Astrocyte of the cerebellum (primary cell): ENCODE measurements at regions of chr1 and their contacts with region 1.

Region 1: DNA sequence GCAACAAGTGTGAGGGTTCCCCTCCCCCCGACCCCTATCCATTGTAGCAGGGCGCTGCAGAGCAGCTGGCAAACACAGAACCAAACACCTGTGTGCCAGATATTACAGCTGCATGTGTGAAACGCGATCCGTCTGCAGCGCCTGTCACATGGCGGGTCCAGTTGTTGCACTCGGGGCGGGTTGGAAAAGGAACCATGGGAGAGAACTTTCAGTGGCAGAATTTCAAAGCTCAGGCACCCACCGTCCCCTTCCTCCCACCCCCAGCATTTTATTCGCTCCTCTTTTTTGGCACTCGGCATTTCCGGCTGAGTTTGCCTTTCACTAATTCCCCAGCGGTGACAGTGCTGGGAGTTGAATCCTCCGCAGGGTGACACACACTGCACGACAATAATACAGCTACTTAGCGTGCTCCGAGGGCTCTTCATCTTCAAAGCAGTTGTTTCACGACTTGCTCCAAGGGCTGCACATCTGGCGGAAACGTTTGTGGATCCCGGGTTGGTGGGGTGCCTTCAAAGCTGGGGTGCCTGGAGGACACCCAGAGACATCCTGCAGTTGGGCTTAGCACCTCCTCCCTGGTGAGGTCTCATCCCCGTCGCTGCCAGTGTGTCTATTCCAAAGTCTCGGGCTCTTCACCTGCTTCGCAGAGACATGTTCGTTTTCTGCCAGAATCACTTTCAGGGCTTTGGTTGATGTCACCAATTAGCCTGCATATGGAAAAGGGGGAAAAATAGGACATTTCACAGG is 180.7 kb downstream of the ZBTB18 start:
- DNase-seq: no peak
- H3K4me3 ChIP-seq: peak overlapping the region; percentile 13
- CTCF ChIP-seq: no peak

Region 2: GRCh38 chr1:244049162-244050005 is 182.4 kb before region 1 on chr1:
- in situ Hi-C with region 1: loop called (anchors 25 kb)
- DNase-seq: no peak
- H3K4me3 ChIP-seq: peak overlapping the region; percentile 52
- CTCF ChIP-seq: no peak

Region 3: DNA sequence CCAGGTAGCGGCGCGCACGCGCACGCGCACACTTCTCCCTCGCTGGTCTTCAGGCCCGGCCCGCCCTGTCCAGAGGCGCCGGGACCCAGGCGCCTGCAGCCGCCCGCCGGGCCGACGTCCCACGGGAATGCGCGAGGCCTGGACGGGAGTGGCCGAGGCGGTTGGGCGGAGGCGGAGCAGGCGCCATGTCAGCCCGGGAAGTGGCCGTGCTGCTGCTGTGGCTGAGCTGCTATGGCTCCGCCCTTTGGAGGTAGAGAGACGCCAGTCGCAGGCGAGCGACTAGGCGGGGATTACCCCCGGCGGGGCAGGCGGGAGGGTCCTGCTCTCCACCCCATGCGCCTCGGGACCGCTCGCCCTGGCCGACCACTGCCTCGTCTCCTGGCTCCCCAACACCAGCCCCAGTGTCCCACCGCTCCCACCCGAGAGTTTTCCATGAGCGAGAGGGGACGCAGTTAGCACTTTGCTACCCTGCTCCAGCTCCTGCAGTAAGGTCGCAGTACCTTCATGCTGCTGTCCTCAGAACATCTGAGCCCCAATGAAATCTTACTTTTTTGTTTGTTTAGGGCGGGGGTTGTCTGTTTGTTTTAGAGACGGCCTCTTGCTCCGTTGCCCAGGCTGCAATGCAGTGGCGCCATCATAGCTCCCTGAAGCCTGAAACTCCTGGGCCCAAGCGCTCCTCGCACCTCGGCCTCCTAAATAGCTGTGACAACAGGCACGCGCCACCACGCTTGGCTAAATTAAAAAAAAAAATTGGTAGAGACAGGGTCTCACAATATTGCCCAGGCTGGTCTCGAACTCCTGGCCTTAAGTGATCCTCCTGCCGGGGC is 229.7 kb after region 1 on chr1 and contains the start of gene CATSPERE:
- in situ Hi-C with region 1: no loop called
- DNase-seq: peak; percentile 41
- H3K4me3 ChIP-seq: peak within 1 kb of the TSS; percentile 50
- CTCF ChIP-seq: no peak